Activated CD4-positive, alpha-beta T cell treated with anti-CD3 and anti-CD28 coated beads, Interleukin-2, amount 10 ng/mL, durations not matched to agents 7 days and 5 days (primary cell): ENCODE measurements at regions of chr19 and their contacts with region 1.

Region 1: GRCh38 chr19:10259162-10259905 is 7.3 kb downstream of the MRPL4 start:
- DNase-seq: peak; percentile 95
- H3K4me3 Mint-ChIP-seq: no peak overlapping the region
- H3K27ac Mint-ChIP-seq: peak overlapping the region; percentile 64
- H3K4me1 Mint-ChIP-seq: peaks cover 23% of the 10 kb centered on the region
- H3K27me3 Mint-ChIP-seq: no peaks in the 10 kb centered on the region

Region 2: GRCh38 chr19:10222201-10222890 is 37.0 kb before region 1 on chr19:
- CTCF ChIA-PET with region 1: no interaction called
- POLR2A ChIA-PET with region 1: no interaction called
- DNase-seq: no peak
- H3K4me3 Mint-ChIP-seq: no peak overlapping the region
- H3K27ac Mint-ChIP-seq: no peak overlapping the region
- H3K4me1 Mint-ChIP-seq: peaks cover 3% of the 10 kb centered on the region
- H3K27me3 Mint-ChIP-seq: no peaks in the 10 kb centered on the region

Region 3: GRCh38 chr19:10269333-10270179 is 10.2 kb after region 1 on chr19:
- CTCF ChIA-PET with region 1: interaction called, 78 read pairs
- POLR2A ChIA-PET with region 1: interaction called, 9 read pairs
- DNase-seq: peak; percentile 88
- H3K4me3 Mint-ChIP-seq: peak overlapping the region; percentile 75
- H3K27ac Mint-ChIP-seq: peak overlapping the region; percentile 90
- H3K4me1 Mint-ChIP-seq: peaks cover 32% of the 10 kb centered on the region
- H3K27me3 Mint-ChIP-seq: no peaks in the 10 kb centered on the region

Region 4: DNA sequence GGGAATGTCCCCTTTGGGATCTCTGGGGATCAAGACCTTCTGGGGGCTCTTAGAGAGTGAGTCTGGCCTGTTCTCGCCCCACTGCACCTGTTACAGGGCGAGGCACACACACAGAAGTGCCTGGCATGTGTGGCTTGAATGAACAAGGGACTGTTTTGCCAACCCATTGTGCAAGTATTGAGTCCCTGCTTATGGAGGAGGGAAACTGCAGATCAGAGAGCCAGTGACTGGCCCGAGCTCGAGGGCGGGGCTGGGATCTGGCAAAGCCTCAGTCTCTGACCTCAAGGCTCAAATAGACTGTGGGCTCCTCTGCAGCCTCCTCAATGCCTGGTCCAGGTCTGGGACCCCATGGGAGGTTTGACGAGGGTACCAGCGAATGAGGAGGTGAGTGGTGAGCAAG is 68.5 kb after region 1 on chr19:
- CTCF ChIA-PET with region 1: no interaction called
- POLR2A ChIA-PET with region 1: no interaction called
- DNase-seq: no peak
- H3K4me3 Mint-ChIP-seq: no peak overlapping the region
- H3K27ac Mint-ChIP-seq: no peak overlapping the region
- H3K4me1 Mint-ChIP-seq: peaks cover 12% of the 10 kb centered on the region
- H3K27me3 Mint-ChIP-seq: no peaks in the 10 kb centered on the region

Region 5: DNA sequence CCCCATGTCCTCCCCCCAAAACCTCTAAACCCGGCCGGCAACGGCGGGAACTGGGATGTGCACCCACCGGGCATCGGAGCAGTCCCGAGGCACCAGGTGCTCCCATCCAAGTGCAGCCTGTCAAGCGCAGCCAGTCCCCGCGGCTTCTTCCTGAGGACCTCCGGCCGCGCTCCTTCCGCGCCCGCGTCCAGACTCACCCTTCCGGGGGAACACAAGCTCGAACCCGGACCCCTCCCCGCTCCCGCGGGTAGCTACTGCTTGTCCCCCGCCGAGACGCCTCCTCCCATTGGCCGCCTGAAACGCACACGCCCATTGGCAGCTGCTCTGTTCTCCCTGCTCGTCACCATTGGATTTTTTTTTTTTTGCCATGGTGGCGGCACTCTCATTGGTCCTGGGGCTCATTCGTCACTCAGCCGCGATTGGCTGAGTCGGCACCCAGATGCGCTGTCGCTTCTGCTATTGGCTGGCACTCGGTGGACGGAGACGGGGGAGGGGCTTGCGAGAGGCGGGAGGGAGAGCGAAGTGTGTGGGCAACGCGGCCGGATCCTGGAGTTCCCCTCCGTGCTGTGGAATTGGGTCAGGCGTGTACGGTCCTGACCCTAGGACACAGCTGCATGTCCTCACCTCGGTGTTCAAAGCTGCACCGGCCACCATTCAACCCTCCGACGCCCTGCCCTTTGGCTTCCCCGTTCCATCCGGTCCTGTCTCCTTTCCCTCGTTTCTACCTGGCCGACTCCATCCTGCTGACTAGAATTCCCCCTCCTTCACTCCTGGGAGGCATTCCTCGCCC is 121.2 kb after region 1 on chr19 and contains the start of gene TYK2:
- CTCF ChIA-PET with region 1: interaction called, 14 read pairs
- POLR2A ChIA-PET with region 1: interaction called, 3 read pairs
- DNase-seq: peak; percentile 97
- H3K4me3 Mint-ChIP-seq: peak within 1 kb of the TSS; percentile 85
- H3K27ac Mint-ChIP-seq: peak within 1 kb of the TSS; percentile 94
- H3K4me1 Mint-ChIP-seq: peaks cover 21% of the 10 kb centered on the region
- H3K27me3 Mint-ChIP-seq: no peaks in the 10 kb centered on the region
- total RNA-seq, gene TYK2: 251 to 263 TPM

Region 6: DNA sequence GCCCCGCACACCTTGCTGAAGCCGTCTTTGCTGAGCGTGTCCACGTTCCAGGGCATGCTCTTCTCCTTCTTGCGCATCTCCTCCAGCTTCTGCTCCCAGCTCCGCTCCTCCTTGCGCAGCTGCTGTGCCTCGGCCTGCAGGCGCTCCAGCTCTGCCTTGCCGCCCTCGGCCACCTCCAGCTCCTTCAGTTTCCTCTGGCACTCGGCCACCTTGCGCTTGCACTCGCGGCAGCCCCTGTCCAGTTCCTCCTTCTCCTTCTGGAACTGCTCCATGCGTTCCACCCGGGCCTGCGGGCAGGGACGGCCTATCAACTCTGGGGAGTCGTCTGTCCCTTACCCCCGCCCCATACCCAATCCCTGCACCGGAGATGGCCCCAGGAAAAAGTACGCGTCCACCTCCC is 136.6 kb after region 1 on chr19:
- CTCF ChIA-PET with region 1: interaction called, 148 read pairs
- POLR2A ChIA-PET with region 1: interaction called, 3 read pairs
- DNase-seq: no peak
- H3K4me3 Mint-ChIP-seq: no peak overlapping the region
- H3K27ac Mint-ChIP-seq: no peak overlapping the region
- H3K4me1 Mint-ChIP-seq: peaks cover 20% of the 10 kb centered on the region
- H3K27me3 Mint-ChIP-seq: no peaks in the 10 kb centered on the region

Region 7: GRCh38 chr19:10416380-10417257 is 157.3 kb after region 1 on chr19:
- CTCF ChIA-PET with region 1: interaction called, 17 read pairs
- POLR2A ChIA-PET with region 1: no interaction called
- DNase-seq: peak; percentile 93
- H3K4me3 Mint-ChIP-seq: peak overlapping the region; percentile 66
- H3K27ac Mint-ChIP-seq: peak overlapping the region; percentile 89
- H3K4me1 Mint-ChIP-seq: peaks cover 67% of the 10 kb centered on the region
- H3K27me3 Mint-ChIP-seq: peaks cover 38% of the 10 kb centered on the region